GM12878 (cell line): ENCODE measurements at regions of chr10 and their contacts with region 1.

Region 1: DNA sequence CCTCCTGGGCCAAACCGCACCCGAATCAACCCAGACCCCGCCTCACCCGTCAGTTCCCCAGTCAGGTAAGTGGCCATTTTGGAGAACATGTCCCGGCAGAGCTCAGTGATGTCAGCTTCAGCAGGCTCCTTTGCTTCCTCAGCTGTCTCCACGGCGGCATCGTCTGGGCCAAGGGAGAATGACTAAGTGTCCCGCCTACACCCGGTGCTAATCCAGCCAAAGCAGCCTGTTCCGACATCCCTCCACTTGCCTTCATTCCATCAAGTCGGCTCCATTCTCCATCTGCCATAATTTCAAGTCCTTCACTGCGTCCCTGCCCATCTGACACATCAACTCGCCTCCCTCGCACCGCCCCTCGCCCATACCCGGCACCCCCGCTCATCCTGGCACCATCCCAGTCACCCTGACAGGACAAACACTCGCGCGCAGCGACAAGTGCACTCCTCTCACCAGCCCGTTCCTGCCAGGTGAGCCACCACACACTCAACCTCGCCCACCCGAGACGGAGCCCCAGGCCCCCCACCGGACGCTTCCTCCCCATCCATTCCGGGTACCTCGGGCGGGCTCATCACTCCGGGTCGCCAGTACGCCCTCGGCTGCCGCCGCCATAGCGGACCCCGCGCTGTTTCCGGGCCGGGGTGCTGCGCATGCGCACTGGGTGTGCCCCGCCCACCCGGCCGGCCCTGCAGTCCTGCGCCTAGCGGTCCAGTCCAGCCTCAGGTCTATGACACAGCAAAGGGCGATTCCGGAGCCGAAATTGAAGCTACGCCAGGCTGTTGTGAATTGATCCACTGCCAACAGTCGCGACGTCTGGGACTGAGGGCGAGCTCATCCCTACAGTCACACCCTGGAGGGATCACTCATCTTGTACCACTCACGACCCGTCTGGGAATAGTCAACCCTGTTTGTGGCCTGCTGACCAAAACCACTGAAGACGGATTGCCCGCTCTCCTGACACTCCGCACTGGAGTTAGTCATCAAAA is at the start of gene BLOC1S2:
- DNase-seq: peak; percentile 61
- ATAC-seq: peak; percentile 97
- H3K4me3 ChIP-seq: peak within 1 kb of the TSS; percentile 92
- H3K27ac ChIP-seq: peak within 1 kb of the TSS; percentile 92
- H3K4me1 ChIP-seq: peaks cover 8% of the 10 kb centered on the region; the same call in 1 of the 2 replicates
- H3K27me3 ChIP-seq: no peaks in the 10 kb centered on the region
- CTCF ChIP-seq: 0 out of 6 replicates have a peak, but pooled peaks of 1 of the 3 experiments have one; percentile 4
- EP300 ChIP-seq: no peak
- POLR2A ChIP-seq: peak; percentile 98
- RAD21 ChIP-seq: no peak
- polyA plus RNA-seq, gene BLOC1S2: 106 to 120 TPM

Region 2: DNA sequence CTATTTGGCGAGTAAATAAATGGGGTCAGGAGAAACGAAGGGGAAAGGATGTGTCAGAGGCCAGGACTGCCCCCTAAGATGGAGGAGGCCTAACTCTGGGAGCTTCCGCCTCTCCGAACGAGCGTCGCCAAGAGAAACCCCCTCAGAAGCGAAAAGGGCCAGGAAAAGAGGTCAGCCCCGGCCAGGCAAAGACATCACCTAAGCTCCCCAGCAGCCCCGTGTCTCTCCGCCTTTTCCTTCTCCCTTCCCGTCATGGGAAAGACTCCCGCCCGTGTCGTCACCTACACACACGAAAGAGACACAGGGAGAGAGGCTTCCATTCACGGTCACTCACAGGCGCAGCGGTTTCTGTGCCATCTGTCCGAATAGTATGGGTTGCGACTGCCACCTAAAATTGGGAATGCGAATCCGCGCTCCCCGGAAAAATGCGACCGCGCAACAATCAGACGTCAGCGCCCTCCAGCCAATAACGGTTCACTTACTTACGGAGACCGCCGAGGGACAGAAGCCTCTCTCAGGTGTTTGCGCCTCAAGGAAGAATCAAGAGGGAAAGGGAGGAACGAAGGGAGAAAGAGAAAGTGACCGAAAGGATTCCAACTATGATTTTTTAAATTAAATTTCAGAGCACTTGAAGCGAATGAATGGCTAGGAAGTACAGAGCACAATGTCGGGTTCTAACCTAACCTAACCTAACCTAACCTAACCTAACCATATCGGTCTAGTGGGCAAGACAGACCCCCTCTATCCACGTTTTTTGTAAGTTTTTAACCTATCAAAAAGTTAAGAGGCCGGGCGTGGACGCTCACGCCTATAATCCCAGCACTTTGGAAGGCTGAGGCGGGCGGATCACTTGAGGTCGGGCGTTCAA is 18.9 kb before region 1 on chr10 and contains the start of gene CWF19L1:
- CTCF ChIA-PET with region 1: interaction called, 3 read pairs
- POLR2A ChIA-PET with region 1: interaction called, 3 read pairs
- RAD21 ChIA-PET with region 1: interaction called, 3 read pairs
- SMC1A ChIA-PET with region 1: interaction called, 4 read pairs
- in situ Hi-C with region 1: no loop called
- intact Hi-C with region 1: loop called (anchors 1 kb)
- DNase-seq: peak; percentile 33
- ATAC-seq: peak; percentile 86
- H3K4me3 ChIP-seq: peak within 1 kb of the TSS; percentile 82
- H3K27ac ChIP-seq: peak within 1 kb of the TSS; percentile 94
- H3K4me1 ChIP-seq: peaks cover 7% of the 10 kb centered on the region
- H3K27me3 ChIP-seq: no peaks in the 10 kb centered on the region
- CTCF ChIP-seq: no peak
- EP300 ChIP-seq: peak in 1 of 2 experiments; percentile 25; a peak in 1 of 4 replicates
- POLR2A ChIP-seq: peak; percentile 84
- RAD21 ChIP-seq: no peak
- polyA plus RNA-seq, gene CWF19L1: 37.6 to 51.7 TPM